ENCODE measurements at regions of chrX and their contacts with region 1.

Region 1: GRCh38 chrX:55717521-55718497 is at the start of gene RRAGB:
- DNase-seq: peak; percentile 67 to 92 (median 88)
- ATAC-seq: peak; percentile 99
- H3K4me3 ChIP-seq: peak within 1 kb of the TSS; percentile 88
- H3K4me3 Mint-ChIP-seq: peak within 1 kb of the TSS; percentile 78 to 96 (median 88)
- H3K27ac ChIP-seq: peak within 1 kb of the TSS; percentile 86
- H3K27ac Mint-ChIP-seq: peak within 1 kb of the TSS; percentile 82 to 95 (median 90)
- H3K4me1 ChIP-seq: peaks cover 13 to 16% of the 10 kb centered on the region in 2 donors
- H3K4me1 Mint-ChIP-seq: peaks cover 23 to 53% (median 37%) of the 10 kb centered on the region in 7 donors
- H3K27me3 ChIP-seq: no peaks in the 10 kb centered on the region
- H3K27me3 Mint-ChIP-seq: no peaks in the 10 kb centered on the region
- total RNA-seq, gene RRAGB: 11.9 to 15.9 (median 12.9) TPM

Region 2: DNA sequence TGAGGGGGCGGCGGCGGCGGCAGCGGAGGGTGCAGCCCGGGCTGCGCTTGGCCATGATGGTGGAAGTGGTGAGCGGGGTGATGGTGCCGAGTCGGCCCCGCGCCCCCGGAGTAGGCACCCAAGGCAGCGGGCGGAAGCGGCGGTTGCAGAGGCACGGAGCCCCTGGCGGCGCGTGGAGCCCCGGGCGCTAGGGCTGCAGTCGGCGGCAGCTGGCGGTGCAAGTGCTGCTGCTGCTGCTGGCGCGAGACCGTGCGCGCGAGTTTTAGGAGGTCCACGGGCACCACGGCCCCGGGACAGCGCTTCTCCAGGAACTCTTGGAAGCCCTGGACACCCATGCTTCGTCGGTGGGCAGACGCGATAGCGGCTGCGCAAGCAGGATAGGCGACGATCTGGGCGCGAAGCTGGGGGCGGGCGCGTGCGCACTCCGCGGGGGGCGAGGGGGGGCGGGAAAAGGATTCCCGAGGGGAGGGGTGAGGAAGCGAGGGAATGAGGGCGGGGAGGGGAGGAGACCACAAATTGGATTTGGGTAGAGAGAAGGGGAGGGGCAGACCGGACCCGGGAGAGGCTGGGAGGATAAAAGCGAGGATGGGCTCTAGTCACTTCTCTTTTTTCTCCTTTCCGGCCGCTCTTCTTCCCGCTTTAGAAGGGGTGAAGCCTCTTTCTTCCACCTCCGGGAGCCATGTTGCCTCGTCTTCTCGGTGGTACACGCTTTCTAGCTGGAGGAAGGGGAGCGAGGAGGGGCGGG is 1534.8 kb before region 1 on chrX and contains the start of gene FAM120C:
- CTCF ChIA-PET with region 1: no interaction called
- POLR2A ChIA-PET with region 1: no interaction called
- intact Hi-C with region 1: loop called in 1 of 2 experiments (anchors 1 kb)
- DNase-seq: peak; percentile 23 to 70 (median 65)
- ATAC-seq: peak; percentile 79
- H3K4me3 ChIP-seq: peak within 1 kb of the TSS; percentile 62
- H3K4me3 Mint-ChIP-seq: peak within 1 kb of the TSS; percentile 70 to 92 (median 88)
- H3K27ac ChIP-seq: peak within 1 kb of the TSS; percentile 78
- H3K27ac Mint-ChIP-seq: peak within 1 kb of the TSS; percentile 81 to 91 (median 88)
- H3K4me1 ChIP-seq: peaks cover 22 to 27% of the 10 kb centered on the region in 2 donors
- H3K4me1 Mint-ChIP-seq: peaks cover 30 to 42% (median 39%) of the 10 kb centered on the region in 7 donors
- H3K27me3 ChIP-seq: no peaks in the 10 kb centered on the region
- H3K27me3 Mint-ChIP-seq: no peaks in the 10 kb centered on the region
- total RNA-seq, gene FAM120C: 13.5 to 24.7 (median 17.6) TPM

Region 3: DNA sequence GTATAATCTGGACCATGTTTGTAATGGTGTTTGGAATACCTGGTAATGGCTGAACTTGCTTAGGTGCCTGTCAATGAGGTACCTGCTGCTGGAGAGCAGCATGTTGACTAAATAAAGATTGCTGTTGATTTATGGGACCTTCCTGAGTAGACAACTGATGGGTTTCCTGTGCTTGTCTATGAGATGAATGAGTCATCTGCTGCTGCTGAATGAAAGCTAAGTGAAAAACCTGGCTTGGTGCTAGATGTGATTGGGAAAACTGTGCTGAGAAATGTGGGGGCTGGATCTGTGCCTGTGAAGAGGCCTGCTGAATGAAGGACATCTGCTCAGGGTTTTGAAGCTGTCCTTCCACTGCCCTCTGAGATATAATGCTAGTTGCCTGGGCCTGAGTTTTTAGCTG is 1429.5 kb before region 1 on chrX:
- CTCF ChIA-PET with region 1: no interaction called
- POLR2A ChIA-PET with region 1: no interaction called
- intact Hi-C with region 1: no loop called
- DNase-seq: no peak
- ATAC-seq: no peak
- H3K4me3 ChIP-seq: no peak overlapping the region
- H3K4me3 Mint-ChIP-seq: no peak overlapping the region
- H3K27ac ChIP-seq: no peak overlapping the region
- H3K27ac Mint-ChIP-seq: no peak overlapping the region
- H3K4me1 ChIP-seq: no peaks in the 10 kb centered on the region
- H3K4me1 Mint-ChIP-seq: no peaks in the 10 kb centered on the region
- H3K27me3 ChIP-seq: no peaks in the 10 kb centered on the region
- H3K27me3 Mint-ChIP-seq: peaks cover 0 to 2% (median 0%) of the 10 kb centered on the region in 5 donors

Region 4: GRCh38 chrX:54999717-55000598 is 717.9 kb before region 1 on chrX and contains the start of gene APEX2:
- CTCF ChIA-PET with region 1: no interaction called
- POLR2A ChIA-PET with region 1: no interaction called
- intact Hi-C with region 1: loop called in 1 of 2 experiments (anchors 5 kb)
- DNase-seq: peak; percentile 66 to 89 (median 85)
- ATAC-seq: peak; percentile 97
- H3K4me3 ChIP-seq: peak within 1 kb of the TSS; percentile 95
- H3K4me3 Mint-ChIP-seq: peak within 1 kb of the TSS; percentile 90 to 97 (median 94)
- H3K27ac ChIP-seq: peak within 1 kb of the TSS; percentile 90
- H3K27ac Mint-ChIP-seq: peak within 1 kb of the TSS; percentile 94 to 99 (median 96)
- H3K4me1 ChIP-seq: peaks cover 9 to 17% of the 10 kb centered on the region in 2 donors
- H3K4me1 Mint-ChIP-seq: peaks cover 8 to 35% (median 26%) of the 10 kb centered on the region in 7 donors
- H3K27me3 ChIP-seq: no peaks in the 10 kb centered on the region
- H3K27me3 Mint-ChIP-seq: no peaks in the 10 kb centered on the region
- total RNA-seq, gene APEX2: 6.5 to 24.6 (median 12.2) TPM

Region 5: DNA sequence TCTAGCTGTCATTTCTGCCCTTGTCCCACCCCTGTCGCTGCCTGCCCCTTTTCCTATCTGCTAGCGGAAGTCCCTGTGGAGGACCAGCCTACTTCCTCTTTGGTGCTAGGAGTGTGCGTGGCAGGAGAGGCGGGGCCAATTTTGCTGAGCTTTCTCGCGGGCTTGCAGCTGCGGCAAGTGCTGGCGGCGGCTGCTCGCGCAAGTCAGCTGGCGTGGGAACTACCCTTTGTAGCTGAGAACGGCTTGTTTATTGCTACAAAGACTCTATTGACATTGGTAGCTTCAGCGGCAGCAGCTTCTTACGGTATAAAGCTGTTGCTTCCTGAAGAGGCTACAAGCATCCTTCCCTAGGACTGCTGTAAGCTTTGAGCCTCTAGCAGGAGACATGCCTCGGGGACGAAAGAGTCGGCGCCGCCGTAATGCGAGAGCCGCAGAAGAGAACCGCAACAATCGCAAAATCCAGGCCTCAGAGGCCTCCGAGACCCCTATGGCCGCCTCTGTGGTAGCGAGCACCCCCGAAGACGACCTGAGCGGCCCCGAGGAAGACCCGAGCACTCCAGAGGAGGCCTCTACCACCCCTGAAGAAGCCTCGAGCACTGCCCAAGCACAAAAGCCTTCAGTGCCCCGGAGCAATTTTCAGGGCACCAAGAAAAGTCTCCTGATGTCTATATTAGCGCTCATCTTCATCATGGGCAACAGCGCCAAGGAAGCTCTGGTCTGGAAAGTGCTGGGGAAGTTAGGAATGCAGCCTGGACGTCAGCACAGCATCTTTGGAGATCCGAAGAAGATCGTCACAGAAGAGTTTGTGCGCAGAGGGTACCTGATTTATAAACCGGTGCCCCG is 265.6 kb before region 1 on chrX and contains the start of gene MAGEH1:
- CTCF ChIA-PET with region 1: no interaction called
- POLR2A ChIA-PET with region 1: interaction called, 14 read pairs
- intact Hi-C with region 1: no loop called
- DNase-seq: peak; percentile 39 to 88 (median 81)
- ATAC-seq: peak; percentile 95
- H3K4me3 ChIP-seq: peak within 1 kb of the TSS; percentile 82
- H3K4me3 Mint-ChIP-seq: peak within 1 kb of the TSS; percentile 90 to 98 (median 95)
- H3K27ac ChIP-seq: peak within 1 kb of the TSS; percentile 88
- H3K27ac Mint-ChIP-seq: peak within 1 kb of the TSS; percentile 91 to 98 (median 95)
- H3K4me1 ChIP-seq: peaks cover 0 to 3% of the 10 kb centered on the region in 2 donors
- H3K4me1 Mint-ChIP-seq: peaks cover 2 to 23% (median 16%) of the 10 kb centered on the region in 7 donors
- H3K27me3 ChIP-seq: no peaks in the 10 kb centered on the region
- H3K27me3 Mint-ChIP-seq: peaks cover 0 to 3% (median 0%) of the 10 kb centered on the region in 5 donors
- total RNA-seq, gene MAGEH1: 12.3 to 29.6 (median 20.3) TPM

Region 6: GRCh38 chrX:55742649-55743048 is 24.8 kb after region 1 on chrX:
- CTCF ChIA-PET with region 1: no interaction called
- POLR2A ChIA-PET with region 1: no interaction called
- intact Hi-C with region 1: no loop called
- DNase-seq: no peak
- ATAC-seq: no peak
- H3K4me3 ChIP-seq: no peak overlapping the region
- H3K4me3 Mint-ChIP-seq: no peak overlapping the region
- H3K27ac ChIP-seq: no peak overlapping the region
- H3K27ac Mint-ChIP-seq: no peak overlapping the region
- H3K4me1 ChIP-seq: no peaks in the 10 kb centered on the region
- H3K4me1 Mint-ChIP-seq: peaks cover 0 to 2% (median 0%) of the 10 kb centered on the region in 7 donors
- H3K27me3 ChIP-seq: no peaks in the 10 kb centered on the region
- H3K27me3 Mint-ChIP-seq: no peaks in the 10 kb centered on the region

Region 7: DNA sequence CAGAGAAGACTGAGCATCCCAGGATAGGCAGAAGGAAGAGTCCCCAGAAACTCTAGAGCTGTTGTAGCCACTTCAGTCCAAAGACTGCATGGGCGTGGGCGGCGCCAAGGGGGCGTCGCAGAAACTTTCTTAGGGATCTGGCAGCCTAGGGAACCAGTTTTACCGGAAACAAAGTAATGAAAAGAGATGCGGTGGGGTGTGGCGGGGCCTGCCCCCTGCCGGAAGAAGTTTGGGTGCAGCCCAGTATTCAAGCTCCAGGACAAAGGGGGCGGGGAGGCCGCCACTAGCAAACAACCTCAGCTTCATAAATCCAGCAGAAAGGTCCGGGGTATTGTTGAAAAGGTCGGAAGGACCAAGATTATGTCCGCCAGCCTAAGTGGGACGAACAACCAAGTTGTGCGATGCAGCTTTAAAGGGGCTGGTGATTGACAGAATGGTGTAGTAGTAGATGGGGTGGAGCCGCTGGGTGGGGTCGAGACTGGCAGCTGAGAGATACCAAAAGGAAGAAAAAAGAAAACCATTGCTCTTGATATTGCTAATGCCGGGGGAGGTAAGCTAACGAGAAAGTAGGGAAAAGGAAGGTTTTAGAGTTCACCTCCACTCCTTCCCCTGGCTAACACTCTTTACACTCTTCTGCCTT is 190.3 kb after region 1 on chrX:
- CTCF ChIA-PET with region 1: interaction called, 5 read pairs
- POLR2A ChIA-PET with region 1: no interaction called
- intact Hi-C with region 1: loop called (anchors 1 kb)
- DNase-seq: peak; percentile 7 to 50 (median 44)
- ATAC-seq: peak; percentile 80
- H3K4me3 ChIP-seq: peak overlapping the region; percentile 83
- H3K4me3 Mint-ChIP-seq: peak overlapping the region; percentile 80 to 97 (median 94)
- H3K27ac ChIP-seq: peak overlapping the region; percentile 61
- H3K27ac Mint-ChIP-seq: peak overlapping the region; percentile 53 to 93 (median 85)
- H3K4me1 ChIP-seq: no peaks in the 10 kb centered on the region
- H3K4me1 Mint-ChIP-seq: peaks cover 6 to 32% (median 16%) of the 10 kb centered on the region in 7 donors
- H3K27me3 ChIP-seq: no peaks in the 10 kb centered on the region
- H3K27me3 Mint-ChIP-seq: no peaks in the 10 kb centered on the region

Region 8: DNA sequence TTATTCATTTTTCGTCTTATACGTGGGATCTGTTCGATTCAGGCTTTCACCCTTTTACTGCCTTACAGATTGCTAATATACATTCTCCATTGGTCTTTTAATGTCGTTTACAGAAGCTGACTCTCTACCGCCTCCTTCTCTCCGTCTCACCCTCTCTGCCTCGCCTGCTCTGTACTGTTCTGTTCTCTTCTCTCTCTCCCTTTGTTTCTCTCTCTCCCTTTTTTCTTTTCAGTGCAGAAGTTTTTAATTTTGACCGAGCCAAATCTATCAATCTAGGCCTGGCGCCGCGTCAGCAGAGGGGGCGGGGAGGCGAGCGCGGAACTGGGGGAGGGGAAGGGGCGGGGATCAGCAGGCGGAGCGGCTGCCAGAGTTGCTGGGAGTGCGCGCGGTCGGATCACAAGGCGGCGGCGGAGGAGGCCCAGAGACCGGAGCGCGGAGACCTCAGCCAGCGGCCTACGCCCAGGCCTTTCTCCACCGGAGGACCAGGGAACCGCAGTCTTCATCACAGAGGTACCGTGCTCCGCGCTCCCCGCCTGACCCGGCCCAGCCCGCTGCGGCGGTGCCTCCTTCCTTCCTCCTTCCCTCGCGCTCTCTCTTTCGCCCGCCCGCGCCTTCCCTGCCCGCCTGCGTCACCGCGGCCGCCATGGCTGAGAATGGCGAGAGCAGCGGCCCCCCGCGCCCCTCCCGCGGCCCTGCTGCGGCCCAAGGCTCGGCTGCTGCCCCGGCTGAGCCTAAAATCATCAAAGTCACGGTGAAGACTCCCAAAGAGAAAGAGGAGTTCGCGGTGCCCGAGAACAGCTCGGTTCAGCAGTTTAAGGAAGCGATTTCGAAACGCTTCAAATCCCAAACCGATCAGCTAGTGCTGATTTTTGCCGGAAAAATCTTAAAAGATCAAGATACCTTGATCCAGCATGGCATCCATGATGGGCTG is 845.7 kb after region 1 on chrX and contains the start of gene UBQLN2:
- CTCF ChIA-PET with region 1: no interaction called
- POLR2A ChIA-PET with region 1: no interaction called
- intact Hi-C with region 1: loop called (anchors 2 to 5 kb)
- DNase-seq: peak; percentile 57 to 78 (median 74)
- ATAC-seq: peak; percentile 89
- H3K4me3 ChIP-seq: peak within 1 kb of the TSS; percentile 98
- H3K4me3 Mint-ChIP-seq: peak within 1 kb of the TSS; percentile 88 to 98 (median 94)
- H3K27ac ChIP-seq: peak within 1 kb of the TSS; percentile 85
- H3K27ac Mint-ChIP-seq: peak within 1 kb of the TSS; percentile 93 to 100 (median 98)
- H3K4me1 ChIP-seq: peaks cover 4 to 5% of the 10 kb centered on the region in 2 donors
- H3K4me1 Mint-ChIP-seq: peaks cover 5 to 20% (median 15%) of the 10 kb centered on the region in 7 donors
- H3K27me3 ChIP-seq: no peaks in the 10 kb centered on the region
- H3K27me3 Mint-ChIP-seq: no peaks in the 10 kb centered on the region
- total RNA-seq, gene UBQLN2: 48.8 to 76.5 (median 56.8) TPM

Region 9: GRCh38 chrX:57286507-57287251 is 1568.9 kb after region 1 on chrX and contains the start of gene FAAH2:
- CTCF ChIA-PET with region 1: no interaction called
- POLR2A ChIA-PET with region 1: no interaction called
- intact Hi-C with region 1: loop called in 1 of 2 experiments (anchors 2 kb)
- DNase-seq: peak; percentile 7 to 88 (median 66)
- ATAC-seq: peak; percentile 91
- H3K4me3 ChIP-seq: peak within 1 kb of the TSS; percentile 82
- H3K4me3 Mint-ChIP-seq: peak within 1 kb of the TSS; percentile 82 to 95 (median 92)
- H3K27ac ChIP-seq: peak within 1 kb of the TSS; percentile 88
- H3K27ac Mint-ChIP-seq: peak within 1 kb of the TSS; percentile 57 to 96 (median 95)
- H3K4me1 ChIP-seq: peaks cover 0 to 3% of the 10 kb centered on the region in 2 donors
- H3K4me1 Mint-ChIP-seq: peaks cover 5 to 57% (median 43%) of the 10 kb centered on the region in 7 donors
- H3K27me3 ChIP-seq: no peaks in the 10 kb centered on the region
- H3K27me3 Mint-ChIP-seq: no peaks in the 10 kb centered on the region
- total RNA-seq, gene FAAH2: 7.5 to 12.6 (median 9.7) TPM